ENCODE measurements at regions of chr12 and their contacts with region 1.

Region 1: GRCh38 chr12:16198884-16199283 is 78.6 kb downstream of the SLC15A5 start:
- DNase-seq: peak; percentile 98
- H3K4me3 ChIP-seq: peak overlapping the region; percentile 48
- H3K27ac ChIP-seq: peak overlapping the region; percentile 91
- H3K4me1 ChIP-seq: peaks cover 32% of the 10 kb centered on the region
- CTCF ChIP-seq: peak; percentile 34; the same call in 1 of the 2 replicates

Region 2: DNA sequence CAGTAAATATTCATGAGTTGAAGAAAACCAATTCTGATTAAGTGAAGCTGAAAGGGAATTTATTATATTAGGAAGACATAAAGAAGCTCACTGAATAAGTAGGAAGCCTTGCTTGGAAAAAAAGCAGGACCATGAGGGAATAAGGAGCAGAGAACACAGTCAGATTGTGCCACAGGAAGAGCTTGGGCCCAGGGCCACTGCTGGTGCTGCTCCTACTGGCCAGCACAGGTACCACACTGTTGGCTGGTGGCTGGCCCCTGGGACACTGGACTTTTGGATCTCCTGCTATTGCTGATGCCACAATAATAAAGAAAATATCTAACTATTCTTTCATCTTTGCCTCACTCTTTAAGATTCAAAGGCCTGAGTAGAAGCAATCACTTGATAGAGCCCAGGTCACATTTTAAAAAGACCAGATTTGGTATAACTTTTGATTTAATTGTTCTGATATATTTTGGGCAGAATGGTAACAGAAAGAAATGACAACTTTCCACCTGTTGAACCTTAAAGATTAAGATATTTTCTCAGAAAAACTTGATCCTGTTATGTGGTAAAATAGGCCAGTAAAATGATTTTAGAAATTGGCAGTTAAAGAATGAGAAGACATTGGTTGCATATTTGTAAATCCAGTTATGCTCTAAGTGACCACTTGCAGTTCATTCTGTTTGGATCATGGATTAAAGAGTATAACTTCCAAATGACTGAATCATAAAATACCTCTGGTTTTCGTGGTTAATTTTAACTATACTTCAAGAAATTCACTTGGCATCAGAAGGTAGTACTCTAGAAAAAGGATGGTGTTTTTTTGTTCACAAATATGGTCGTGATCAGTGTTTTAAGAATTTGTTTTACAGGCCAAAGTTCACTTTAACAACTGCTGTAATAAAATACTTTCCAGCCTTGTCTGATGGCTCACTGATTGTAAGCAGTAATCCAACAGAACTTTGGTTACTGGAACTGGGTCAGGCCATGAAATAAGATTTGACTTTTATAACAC is 219.5 kb before region 1 on chr12:
- CTCF ChIA-PET with region 1: no interaction called
- POLR2A ChIA-PET with region 1: interaction called, 3 read pairs
- intact Hi-C with region 1: loop called (anchors 2 kb)
- DNase-seq: no peak
- H3K4me3 ChIP-seq: no peak overlapping the region
- H3K27ac ChIP-seq: no peak overlapping the region
- H3K4me1 ChIP-seq: peaks cover 27% of the 10 kb centered on the region
- CTCF ChIP-seq: peak; percentile 67

Region 3: DNA sequence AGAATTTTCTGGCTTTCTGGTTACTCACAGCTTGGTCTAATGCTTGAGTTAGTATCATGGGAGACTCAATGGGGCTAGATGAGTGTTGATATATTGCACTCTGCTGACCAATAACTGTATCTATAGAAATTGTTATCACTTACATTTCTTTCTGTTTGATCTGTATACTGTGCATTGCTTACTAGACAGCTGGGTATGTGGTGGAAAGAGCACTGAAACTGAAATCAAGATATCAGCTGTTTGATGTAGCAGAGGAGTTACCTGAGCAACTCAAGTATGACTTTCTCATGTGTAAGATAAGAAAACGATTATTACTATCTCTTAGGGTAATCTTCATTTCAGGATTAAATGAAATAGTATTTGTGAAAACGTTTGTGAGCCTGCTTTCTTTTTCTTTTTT is 104.4 kb before region 1 on chr12:
- CTCF ChIA-PET with region 1: no interaction called
- POLR2A ChIA-PET with region 1: no interaction called
- intact Hi-C with region 1: no loop called
- DNase-seq: no peak
- H3K4me3 ChIP-seq: no peak overlapping the region
- H3K27ac ChIP-seq: no peak overlapping the region
- H3K4me1 ChIP-seq: no peaks in the 10 kb centered on the region
- CTCF ChIP-seq: no peak

Region 4: DNA sequence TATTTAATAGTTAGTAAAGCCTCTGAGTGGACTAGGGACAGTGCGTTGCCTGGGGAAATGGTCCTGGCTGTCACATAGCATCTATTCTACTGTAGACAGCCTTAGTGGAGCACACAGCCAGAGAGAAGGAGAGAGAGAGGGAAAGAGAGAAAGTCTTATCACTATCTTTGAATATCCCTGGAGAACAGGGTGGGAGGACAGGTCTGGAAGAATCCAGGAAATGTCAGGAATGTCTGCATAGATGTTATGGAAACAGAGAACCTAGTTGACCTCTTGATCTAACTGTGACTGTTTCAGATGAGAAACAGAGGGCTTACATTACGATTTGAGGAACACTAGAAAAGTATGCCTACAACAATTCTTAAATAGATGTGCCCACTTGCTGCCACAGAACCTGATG is 14.2 kb before region 1 on chr12:
- CTCF ChIA-PET with region 1: no interaction called
- POLR2A ChIA-PET with region 1: interaction called, 11 read pairs
- intact Hi-C with region 1: no loop called
- DNase-seq: no peak
- H3K4me3 ChIP-seq: no peak overlapping the region
- H3K27ac ChIP-seq: no peak overlapping the region
- H3K4me1 ChIP-seq: no peaks in the 10 kb centered on the region
- CTCF ChIP-seq: no peak

Region 5: GRCh38 chr12:16347391-16348298 is 148.8 kb after region 1 on chr12 and contains the start of gene MGST1:
- CTCF ChIA-PET with region 1: no interaction called
- POLR2A ChIA-PET with region 1: interaction called, 4 read pairs
- intact Hi-C with region 1: loop called (anchors 2 kb)
- DNase-seq: peak; percentile 70
- H3K4me3 ChIP-seq: peak within 1 kb of the TSS; percentile 75
- H3K27ac ChIP-seq: peak within 1 kb of the TSS; percentile 68
- H3K4me1 ChIP-seq: peaks cover 26% of the 10 kb centered on the region
- CTCF ChIP-seq: no peak
- total RNA-seq, gene MGST1: 16.5 and 17.9 TPM in 2 replicates